Activated naive CD4-positive, alpha-beta T cell treated with anti-CD3 and anti-CD28 coated beads for 36 hours (primary cell): ENCODE measurements at regions of chr20 and their contacts with region 1.

Region 1: DNA sequence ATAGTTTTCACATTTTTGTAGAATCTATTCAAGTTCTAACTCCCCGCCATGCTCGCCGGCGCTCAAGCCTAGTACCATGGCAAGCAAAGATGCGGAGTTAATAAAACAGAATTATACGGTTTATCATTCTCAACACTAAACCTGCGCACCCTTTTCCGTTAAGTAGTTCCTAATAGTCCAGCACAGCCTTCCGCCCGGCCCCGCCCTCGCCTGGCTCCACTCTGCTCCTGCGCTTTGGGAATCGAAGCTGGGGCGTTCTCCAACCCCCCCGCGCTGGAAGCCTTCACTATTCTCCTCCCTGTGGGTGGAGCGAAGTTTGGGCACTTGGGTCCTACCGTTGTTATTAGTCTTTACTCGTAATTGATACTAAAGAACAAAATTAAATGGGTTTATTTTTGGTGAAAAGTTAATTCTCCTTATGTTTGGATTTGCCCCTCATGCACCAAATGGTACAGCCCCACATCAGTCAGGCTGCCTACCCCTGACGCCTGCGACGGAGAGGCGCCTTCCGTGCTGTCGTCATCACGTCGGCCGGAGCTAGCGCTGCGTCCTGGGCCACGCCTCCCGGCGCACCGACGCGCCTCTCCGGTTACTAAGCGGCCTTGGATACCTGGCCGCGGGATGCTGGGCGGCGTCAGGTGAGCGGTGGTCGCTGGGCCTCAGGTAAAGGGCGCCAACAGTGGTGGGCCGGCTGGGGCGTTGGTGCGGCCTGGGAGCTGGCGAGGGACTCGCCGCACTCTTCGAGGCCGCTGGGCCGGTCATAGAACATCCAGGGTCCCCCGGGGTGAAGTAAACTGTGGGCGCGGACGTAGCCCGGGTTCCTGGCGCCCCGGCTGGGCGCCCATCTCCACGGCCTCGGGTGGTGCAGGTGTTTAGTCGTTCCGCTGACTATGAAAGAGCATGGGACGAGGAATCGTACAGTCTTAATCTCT is at the start of gene IFT52:
- DNase-seq: peak; percentile 91
- H3K4me3 Mint-ChIP-seq: peak within 1 kb of the TSS; percentile 82
- H3K27ac Mint-ChIP-seq: peak within 1 kb of the TSS; percentile 93
- H3K4me1 Mint-ChIP-seq: peaks cover 13% of the 10 kb centered on the region
- H3K27me3 Mint-ChIP-seq: no peaks in the 10 kb centered on the region
- total RNA-seq, gene IFT52: 14.2 to 15.8 TPM

Region 2: DNA sequence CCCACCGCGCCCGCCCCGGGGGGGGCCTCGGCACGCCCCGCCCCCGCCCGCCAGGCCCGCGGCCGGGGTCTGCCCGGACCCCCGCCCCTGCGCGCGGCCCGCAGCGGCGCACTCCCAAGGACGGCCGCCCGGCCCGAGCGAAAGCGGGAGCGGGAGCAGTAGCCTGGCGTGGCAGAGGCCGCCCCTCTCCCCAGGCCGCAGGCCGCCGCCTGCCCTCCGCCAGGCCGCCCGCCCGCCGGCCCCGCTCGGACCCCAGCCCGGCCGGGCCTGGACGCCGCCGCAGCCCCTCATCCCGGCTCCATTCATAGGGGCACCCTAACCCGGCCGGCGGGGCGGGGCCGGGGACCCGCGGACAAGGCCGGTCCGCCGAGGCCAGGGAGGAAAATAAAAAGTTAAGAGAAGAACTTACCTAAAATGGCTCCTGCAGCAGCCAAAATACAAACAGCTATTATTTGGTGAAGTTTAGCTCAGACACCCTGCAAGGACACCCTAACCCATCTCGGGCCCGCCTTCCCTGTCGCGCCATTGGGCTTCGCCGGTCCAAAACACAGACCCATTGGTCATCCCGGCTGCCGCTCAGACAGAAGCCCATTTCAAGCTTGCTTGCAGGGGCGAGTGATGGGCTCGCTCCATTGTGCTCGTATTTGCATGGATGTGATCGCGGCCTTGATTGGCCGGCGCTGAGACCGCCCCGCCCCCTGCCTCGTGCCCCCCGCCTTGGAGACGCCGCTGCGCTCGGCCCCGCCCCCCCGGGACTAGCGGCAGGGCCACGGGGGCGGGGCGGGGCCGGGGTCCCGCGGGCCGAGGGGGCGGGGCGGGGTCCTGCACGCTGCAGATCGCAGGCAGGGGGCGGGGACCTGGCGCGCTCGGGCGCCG is 1972.5 kb before region 1 on chr20 and contains the start of gene CHD6:
- CTCF ChIA-PET with region 1: no interaction called
- intact Hi-C with region 1: loop called (anchors 10 kb)
- DNase-seq: peak; percentile 100
- H3K4me3 Mint-ChIP-seq: peak within 1 kb of the TSS; percentile 85
- H3K27ac Mint-ChIP-seq: peak within 1 kb of the TSS; percentile 68
- H3K4me1 Mint-ChIP-seq: peaks cover 39% of the 10 kb centered on the region
- H3K27me3 Mint-ChIP-seq: no peaks in the 10 kb centered on the region
- total RNA-seq, gene CHD6: 30.1 to 31.8 TPM

Region 3: GRCh38 chr20:43287637-43288036 is 303.0 kb before region 1 on chr20:
- CTCF ChIA-PET with region 1: no interaction called
- intact Hi-C with region 1: no loop called
- DNase-seq: no peak
- H3K4me3 Mint-ChIP-seq: no peak overlapping the region
- H3K27ac Mint-ChIP-seq: no peak overlapping the region
- H3K4me1 Mint-ChIP-seq: no peaks in the 10 kb centered on the region
- H3K27me3 Mint-ChIP-seq: peaks cover 17% of the 10 kb centered on the region

Region 4: DNA sequence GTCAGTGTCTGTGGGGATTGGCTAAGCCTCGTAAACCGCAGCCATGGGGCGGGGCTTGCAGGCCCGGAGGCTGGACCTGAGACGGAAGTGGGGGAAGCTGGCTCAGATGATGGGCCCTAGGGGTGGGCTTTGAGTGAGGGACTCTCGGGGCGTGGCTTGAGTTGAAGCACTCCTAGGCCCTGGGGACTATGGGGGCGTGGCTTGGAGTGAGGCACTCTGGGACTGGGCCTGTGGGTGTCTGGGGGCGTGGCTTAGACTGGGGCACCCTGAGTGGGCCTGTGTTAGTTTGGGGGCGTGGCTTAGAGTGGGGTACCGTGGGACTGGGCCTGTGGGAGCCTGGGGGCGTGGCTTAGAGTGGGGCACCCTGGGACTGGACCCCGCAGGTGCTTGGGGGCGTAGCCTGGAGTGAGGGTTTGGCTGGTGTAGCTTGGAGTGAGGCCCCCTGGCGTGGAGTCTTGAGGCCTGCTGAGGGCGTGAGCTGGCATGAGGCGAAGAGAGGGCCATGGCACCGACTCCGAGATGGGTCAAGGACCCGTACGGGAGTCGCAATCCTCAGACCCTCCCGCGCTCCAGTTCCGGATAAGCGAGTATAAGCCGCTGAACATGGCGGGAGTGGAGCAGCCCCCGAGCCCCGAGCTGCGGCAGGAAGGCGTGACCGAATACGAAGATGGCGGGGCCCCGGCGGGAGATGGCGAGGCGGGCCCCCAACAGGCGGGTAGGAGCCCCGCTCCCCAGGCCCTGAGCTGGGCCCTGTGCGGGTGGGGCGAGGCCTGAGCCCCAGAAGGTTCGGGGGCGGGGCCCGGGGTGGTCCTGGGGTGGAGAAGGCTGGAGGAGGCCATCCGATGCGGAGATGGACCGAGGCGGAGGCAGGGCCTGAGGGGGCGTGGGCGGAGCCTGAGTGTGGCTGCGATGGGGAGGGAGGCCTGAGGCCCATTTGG is 76.3 kb before region 1 on chr20:
- CTCF ChIA-PET with region 1: no interaction called
- intact Hi-C with region 1: loop called (anchors 1 kb)
- DNase-seq: peak; percentile 95
- H3K4me3 Mint-ChIP-seq: peak overlapping the region; percentile 88
- H3K27ac Mint-ChIP-seq: peak overlapping the region; percentile 81
- H3K4me1 Mint-ChIP-seq: peaks cover 12% of the 10 kb centered on the region
- H3K27me3 Mint-ChIP-seq: peaks cover 3% of the 10 kb centered on the region

Region 5: DNA sequence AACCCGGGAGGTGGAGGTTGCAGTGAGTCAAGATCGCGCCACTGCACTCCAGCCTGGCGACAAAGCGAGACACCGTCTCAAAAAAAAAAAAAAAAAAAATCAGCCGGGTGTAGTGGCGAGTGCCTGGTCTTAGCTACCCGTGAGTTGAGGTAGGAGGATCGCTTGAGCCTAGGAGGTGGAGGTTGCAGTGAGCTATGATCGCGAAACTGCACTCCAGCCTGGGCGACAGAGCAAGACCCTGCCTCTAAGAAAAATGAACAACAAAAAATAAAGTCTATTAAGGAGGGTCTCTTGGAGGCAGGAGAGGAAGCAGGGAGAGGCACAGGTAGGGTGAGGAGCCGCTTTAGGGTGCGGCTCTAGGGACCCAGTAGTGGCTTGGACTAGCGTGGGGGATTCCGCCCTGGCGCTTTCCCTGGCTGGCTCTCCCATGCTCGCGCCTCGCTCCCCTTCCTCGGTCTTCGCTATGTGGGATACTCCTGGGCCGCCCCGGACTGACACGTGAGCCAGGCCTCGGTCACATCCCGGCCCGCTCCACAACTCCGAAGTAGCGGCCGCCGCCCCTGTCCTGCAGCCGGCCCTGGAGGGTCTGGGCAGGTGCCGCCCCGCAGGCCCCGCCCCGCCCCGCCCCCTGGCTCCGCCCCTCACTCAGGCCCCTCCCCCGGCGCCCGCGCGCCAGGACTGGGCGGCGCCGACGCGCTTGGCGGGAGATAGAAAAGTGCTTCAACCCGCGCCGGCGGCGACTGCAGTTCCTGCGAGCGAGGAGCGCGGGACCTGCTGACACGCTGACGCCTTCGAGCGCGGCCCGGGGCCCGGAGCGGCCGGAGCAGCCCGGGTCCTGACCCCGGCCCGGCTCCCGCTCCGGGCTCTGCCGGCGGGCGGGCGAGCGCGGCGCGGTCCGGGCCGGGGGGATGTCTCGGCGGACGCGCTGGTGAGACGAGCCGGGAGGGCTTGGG is 76.0 kb after region 1 on chr20 and contains the start of gene MYBL2:
- CTCF ChIA-PET with region 1: no interaction called
- intact Hi-C with region 1: loop called (anchors 2 kb)
- DNase-seq: peak; percentile 74
- H3K4me3 Mint-ChIP-seq: peak within 1 kb of the TSS; percentile 84
- H3K27ac Mint-ChIP-seq: no peak within 1 kb of the TSS
- H3K4me1 Mint-ChIP-seq: peaks cover 4% of the 10 kb centered on the region
- H3K27me3 Mint-ChIP-seq: peaks cover 9% of the 10 kb centered on the region
- total RNA-seq, gene MYBL2: 102 to 106 TPM